ENCODE measurements at regions of chr19 and their contacts with region 1.

Region 1: GRCh38 chr19:56314562-56315077 is at the start of gene ZSCAN5A:
- DNase-seq: peak; percentile 87 to 98
- H3K4me3 ChIP-seq: peak within 1 kb of the TSS; percentile 72 to 86
- H3K27ac ChIP-seq: peak within 1 kb of the TSS; percentile 91 to 98
- H3K4me1 ChIP-seq: peaks cover 0 to 6% of the 10 kb centered on the region in 2 donors
- H3K27me3 ChIP-seq: no peaks in the 10 kb centered on the region
- CTCF ChIP-seq: no peak
- total RNA-seq, gene ZSCAN5A: 13.3 TPM

Region 2: GRCh38 chr19:54448774-54449700 is 1865.6 kb before region 1 on chr19 and contains the start of gene LENG8:
- intact Hi-C with region 1: loop called (anchors 10 kb)
- DNase-seq: peak; percentile 92 to 99
- H3K4me3 ChIP-seq: peak within 1 kb of the TSS; percentile 83 to 97
- H3K27ac ChIP-seq: peak within 1 kb of the TSS; percentile 86 to 97
- H3K4me1 ChIP-seq: peaks cover 11 to 39% of the 10 kb centered on the region in 2 donors
- H3K27me3 ChIP-seq: no peaks in the 10 kb centered on the region
- CTCF ChIP-seq: no peak
- total RNA-seq, gene LENG8: 402 TPM

Region 3: GRCh38 chr19:56121180-56122167 is 193.1 kb before region 1 on chr19 and contains the start of gene ZNF787:
- intact Hi-C with region 1: loop called (anchors 1 kb)
- DNase-seq: peak; percentile 95 to 100
- H3K4me3 ChIP-seq: peak within 1 kb of the TSS; percentile 93 to 99
- H3K27ac ChIP-seq: peak within 1 kb of the TSS; percentile 89 to 99
- H3K4me1 ChIP-seq: peaks cover 13 to 23% of the 10 kb centered on the region in 2 donors
- H3K27me3 ChIP-seq: no peaks in the 10 kb centered on the region
- CTCF ChIP-seq: no peak
- total RNA-seq, gene ZNF787: 18.1 TPM

Region 4: DNA sequence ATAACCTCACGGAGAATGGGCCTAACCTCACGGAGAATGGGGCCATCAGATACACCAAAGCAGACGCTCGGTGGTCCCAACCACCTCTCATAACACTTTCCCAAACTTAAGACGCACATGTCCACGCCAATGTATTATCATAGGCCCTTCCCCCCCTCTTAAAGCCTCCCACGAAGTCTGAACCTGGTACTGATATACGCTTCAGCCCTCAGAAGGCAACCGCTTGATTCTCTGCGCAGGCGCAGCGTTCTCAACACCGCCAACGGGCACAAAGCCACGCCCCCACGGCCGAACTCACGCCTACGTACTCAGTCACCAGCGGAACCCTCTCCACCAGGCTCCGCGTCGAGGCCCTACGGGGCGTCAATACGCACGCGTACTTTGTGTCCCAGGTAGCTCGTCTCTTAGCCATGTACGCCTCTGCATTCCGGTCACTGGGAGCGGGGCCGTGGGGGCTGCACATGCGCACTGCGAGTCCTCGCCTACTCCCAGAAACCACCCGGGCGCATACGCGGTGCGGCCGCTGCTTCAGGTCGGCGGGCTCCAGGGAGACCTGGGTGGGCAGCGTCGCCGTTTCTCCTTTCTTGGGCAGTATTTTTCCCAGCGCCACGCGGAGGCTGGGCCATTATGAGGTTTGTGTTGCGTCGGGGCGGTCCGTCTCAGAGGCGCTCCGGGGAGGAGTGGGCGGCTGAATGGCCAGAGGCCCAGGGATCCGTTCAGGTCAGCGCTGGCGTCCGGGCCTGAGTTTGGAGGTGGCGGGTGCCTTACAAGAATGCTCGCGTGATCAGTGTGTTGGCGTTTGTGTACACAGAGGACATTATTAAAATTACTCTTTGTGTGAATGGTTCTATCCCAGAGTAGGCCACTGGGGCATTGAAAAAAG is 53.5 kb after region 1 on chr19:
- intact Hi-C with region 1: loop called (anchors 2 kb)
- DNase-seq: peak; percentile 60 to 92
- H3K4me3 ChIP-seq: peak overlapping the region; percentile 57 to 74
- H3K27ac ChIP-seq: peak overlapping the region; percentile 74 to 86
- H3K4me1 ChIP-seq: peaks cover 0 to 5% of the 10 kb centered on the region in 2 donors
- H3K27me3 ChIP-seq: no peaks in the 10 kb centered on the region
- CTCF ChIP-seq: no peak

Region 5: DNA sequence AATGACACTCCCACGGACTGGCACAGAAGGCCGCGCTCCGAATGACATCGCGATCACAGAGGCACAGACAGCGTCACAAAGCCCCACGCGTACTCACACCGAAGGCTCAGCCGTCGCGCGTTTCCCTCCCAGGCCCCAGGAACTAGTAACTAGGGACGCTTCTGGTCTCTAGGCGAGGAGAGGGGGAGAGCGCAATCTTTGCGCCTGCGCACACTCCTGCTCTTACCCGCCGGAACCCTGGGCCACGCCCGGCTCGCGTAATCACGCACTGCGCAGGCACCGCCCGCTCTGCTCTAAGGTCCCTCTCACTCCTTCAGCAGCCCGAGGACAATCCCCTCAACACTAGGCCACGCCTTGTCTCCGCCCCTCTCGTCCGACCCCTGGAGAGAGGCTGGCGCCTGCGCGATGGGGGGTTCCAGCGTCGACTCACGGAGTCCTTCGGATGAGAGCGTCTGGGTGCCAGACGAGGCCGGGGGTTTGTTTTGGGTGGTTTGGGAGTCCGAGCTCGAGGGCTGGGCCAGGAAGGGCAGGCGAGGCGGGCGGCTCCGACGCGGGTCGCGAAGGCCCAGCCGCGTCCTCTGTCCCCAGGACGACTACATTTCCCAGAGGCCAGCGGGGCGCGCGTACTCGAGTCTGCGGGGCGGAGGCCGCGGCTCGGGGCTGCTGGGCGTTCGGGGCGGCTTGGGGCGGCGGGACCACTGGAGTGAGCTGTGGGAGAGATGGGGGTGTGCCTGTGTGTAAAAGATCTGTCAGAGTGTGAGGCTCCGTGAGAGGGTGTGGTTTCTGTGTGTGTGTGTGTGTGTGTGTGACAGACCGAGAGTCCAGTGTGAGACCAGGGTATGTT is 193.0 kb after region 1 on chr19 and contains the start of gene ZNF471:
- intact Hi-C with region 1: loop called (anchors 1 kb)
- DNase-seq: peak; percentile 94 to 99
- H3K4me3 ChIP-seq: peak within 1 kb of the TSS; percentile 56 to 94
- H3K27ac ChIP-seq: peak within 1 kb of the TSS; percentile 92 to 100
- H3K4me1 ChIP-seq: peaks cover 0 to 5% of the 10 kb centered on the region in 2 donors
- H3K27me3 ChIP-seq: no peaks in the 10 kb centered on the region
- CTCF ChIP-seq: no peak
- total RNA-seq, gene ZNF471: 4.8 TPM

Region 6: GRCh38 chr19:56778351-56778750 is 463.7 kb after region 1 on chr19:
- intact Hi-C with region 1: no loop called
- DNase-seq: no peak
- H3K4me3 ChIP-seq: no peak overlapping the region
- H3K27ac ChIP-seq: no peak overlapping the region
- H3K4me1 ChIP-seq: no peaks in the 10 kb centered on the region
- H3K27me3 ChIP-seq: no peaks in the 10 kb centered on the region
- CTCF ChIP-seq: no peak

Region 7: DNA sequence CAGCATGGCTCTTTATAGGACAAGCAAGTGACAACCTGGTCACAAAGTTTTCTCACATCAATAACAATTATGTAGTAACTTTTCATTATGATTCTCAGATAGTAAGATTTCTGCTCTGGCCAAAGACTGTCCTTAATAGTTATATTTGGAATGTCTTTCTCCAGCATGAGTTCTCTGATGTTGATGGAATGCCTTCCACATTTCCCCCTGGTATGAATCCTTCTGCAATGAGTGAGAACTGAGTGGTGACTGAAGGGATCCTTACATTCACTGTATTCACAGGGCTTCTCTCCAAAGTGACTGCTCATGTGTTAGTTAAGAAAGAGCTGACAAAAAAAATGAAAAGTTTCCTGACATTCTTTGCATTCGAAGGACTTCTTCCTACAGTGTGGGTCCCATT is 1231.9 kb after region 1 on chr19:
- intact Hi-C with region 1: no loop called
- DNase-seq: no peak
- H3K4me3 ChIP-seq: no peak overlapping the region
- H3K27ac ChIP-seq: no peak overlapping the region
- H3K4me1 ChIP-seq: no peaks in the 10 kb centered on the region
- H3K27me3 ChIP-seq: no peaks in the 10 kb centered on the region
- CTCF ChIP-seq: no peak

Region 8: GRCh38 chr19:57583521-57584416 is 1269.1 kb after region 1 on chr19 and contains the start of gene ZIK1:
- intact Hi-C with region 1: loop called (anchors 10 kb)
- DNase-seq: peak; percentile 39 to 94
- H3K4me3 ChIP-seq: peak within 1 kb of the TSS; percentile 61 to 68
- H3K27ac ChIP-seq: peak within 1 kb of the TSS in 1 of 2 donors; percentile 15
- H3K4me1 ChIP-seq: peaks cover 0 to 8% of the 10 kb centered on the region in 2 donors
- H3K27me3 ChIP-seq: no peaks in the 10 kb centered on the region
- CTCF ChIP-seq: no peak
- total RNA-seq, gene ZIK1: 0.53 TPM

Measured in ascending aorta (tissue), 2 donors.